Lower leg skin (tissue), 4 donors: ENCODE measurements at regions of chr5 and their contacts with region 1.

Region 1: GRCh38 chr5:135944967-135945560 is 9.7 kb downstream of the LECT2 start:
- DNase-seq: peak in 1 of 2 donors; percentile 78
- H3K4me3 ChIP-seq: no peak overlapping the region
- CTCF ChIP-seq: peak in 1 of 3 donors; percentile 82
- POLR2A ChIP-seq: no peak

Region 2: GRCh38 chr5:135921388-135921787 is 23.7 kb before region 1 on chr5:
- intact Hi-C with region 1: no loop called
- DNase-seq: no peak
- H3K4me3 ChIP-seq: no peak overlapping the region
- CTCF ChIP-seq: no peak
- POLR2A ChIP-seq: no peak

Region 3: DNA sequence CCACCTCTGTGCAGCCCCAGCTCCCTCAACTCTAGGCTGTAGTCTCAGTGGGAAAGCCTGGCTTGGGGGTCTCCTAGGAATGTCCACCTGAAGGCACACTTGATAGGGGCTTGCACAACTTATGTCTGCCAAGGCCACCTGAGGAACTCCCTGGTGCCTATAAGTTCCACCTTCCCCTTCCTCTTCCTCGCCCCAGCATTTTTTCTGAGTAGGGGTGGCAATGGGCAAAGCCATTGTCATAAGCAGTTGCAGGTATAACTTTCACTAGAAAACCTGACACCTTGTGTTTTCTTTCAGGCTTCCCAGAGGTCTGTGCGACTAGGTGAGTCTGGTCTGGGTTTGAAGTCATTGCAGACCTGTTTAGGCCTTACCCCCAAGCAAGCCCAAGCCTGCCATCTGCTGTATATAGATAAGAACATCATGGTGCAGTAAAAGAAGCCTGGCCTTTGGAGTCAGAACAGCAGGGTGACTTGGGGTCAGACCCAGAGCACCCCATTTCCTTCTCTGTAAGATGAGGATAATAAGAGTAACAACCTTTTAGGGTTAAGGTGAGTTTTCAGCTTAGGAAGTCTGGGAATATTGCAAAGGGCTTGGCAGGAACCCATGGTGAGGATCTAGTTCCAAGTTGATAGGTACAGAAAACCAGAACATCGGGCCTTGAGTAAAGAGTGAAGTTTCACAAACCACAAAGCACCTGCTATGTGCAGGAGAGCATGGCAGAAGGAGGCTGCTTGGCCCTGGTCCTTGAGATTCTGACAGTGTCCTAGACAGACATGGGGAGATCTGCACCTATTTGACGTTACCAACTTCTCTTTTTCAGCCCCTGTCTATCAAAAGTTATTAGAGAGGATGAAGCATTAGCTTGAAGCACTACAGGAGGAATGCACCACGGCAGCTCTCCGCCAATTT is 117.6 kb after region 1 on chr5:
- intact Hi-C with region 1: loop called (anchors 10 kb)
- DNase-seq: peak in 1 of 2 donors; percentile 72
- H3K4me3 ChIP-seq: no peak overlapping the region
- CTCF ChIP-seq: no peak
- POLR2A ChIP-seq: no peak

Region 4: GRCh38 chr5:136174021-136174659 is 229.1 kb after region 1 on chr5:
- intact Hi-C with region 1: loop called (anchors 2 kb)
- DNase-seq: no peak
- H3K4me3 ChIP-seq: no peak overlapping the region
- CTCF ChIP-seq: no peak
- POLR2A ChIP-seq: no peak

Region 5: DNA sequence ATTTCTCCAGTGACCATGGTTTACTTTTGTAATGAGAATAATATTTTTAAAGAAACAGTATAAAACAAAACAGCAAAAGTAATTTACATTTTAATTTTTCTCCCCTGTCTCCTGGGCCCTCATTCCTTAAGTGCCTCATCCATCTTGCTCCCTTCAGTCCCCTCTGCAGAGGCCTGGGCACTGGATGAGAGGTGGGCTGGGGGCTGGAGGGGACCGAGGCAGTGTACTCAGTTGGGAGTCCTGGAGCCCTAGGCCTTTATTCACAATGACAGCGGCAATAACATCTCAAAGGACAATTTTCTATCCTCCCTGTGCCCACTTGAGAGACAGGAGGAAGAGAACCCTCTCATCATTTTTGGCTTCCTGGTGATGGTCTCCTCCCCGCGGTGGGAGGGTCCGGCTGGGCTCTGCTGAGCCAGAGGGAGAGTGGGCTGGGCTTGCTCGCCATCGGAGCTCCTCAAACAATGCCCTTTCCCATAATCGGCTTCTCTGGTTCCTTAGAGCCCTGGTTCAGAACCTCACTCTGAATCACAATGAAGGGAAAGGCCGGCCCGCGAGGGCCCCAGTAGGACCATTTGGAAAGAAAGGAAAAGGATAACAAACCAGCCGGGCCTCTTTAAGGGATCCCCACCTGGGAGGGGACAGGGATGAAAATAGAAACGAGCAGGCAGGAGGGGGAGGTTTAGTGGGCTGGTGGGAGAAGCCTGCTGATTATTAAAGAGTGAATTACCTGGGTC is 257.6 kb after region 1 on chr5:
- intact Hi-C with region 1: loop called (anchors 10 kb)
- DNase-seq: peak in 1 of 2 donors; percentile 58
- H3K4me3 ChIP-seq: no peak overlapping the region
- CTCF ChIP-seq: no peak
- POLR2A ChIP-seq: no peak